Activated T-helper 2 cell treated with anti-CD3 and anti-CD28 coated beads, Interferon-gamma antibody, Interleukin-2, Interleukin-4, amounts not matched to agents 10 μg/mL and 5 μg/mL and 100 μg/mL, durations not matched to agents 14 hours and 24 hours and 36 hours (primary cell): ENCODE measurements at regions of chr18 and their contacts with region 1.

Region 1: DNA sequence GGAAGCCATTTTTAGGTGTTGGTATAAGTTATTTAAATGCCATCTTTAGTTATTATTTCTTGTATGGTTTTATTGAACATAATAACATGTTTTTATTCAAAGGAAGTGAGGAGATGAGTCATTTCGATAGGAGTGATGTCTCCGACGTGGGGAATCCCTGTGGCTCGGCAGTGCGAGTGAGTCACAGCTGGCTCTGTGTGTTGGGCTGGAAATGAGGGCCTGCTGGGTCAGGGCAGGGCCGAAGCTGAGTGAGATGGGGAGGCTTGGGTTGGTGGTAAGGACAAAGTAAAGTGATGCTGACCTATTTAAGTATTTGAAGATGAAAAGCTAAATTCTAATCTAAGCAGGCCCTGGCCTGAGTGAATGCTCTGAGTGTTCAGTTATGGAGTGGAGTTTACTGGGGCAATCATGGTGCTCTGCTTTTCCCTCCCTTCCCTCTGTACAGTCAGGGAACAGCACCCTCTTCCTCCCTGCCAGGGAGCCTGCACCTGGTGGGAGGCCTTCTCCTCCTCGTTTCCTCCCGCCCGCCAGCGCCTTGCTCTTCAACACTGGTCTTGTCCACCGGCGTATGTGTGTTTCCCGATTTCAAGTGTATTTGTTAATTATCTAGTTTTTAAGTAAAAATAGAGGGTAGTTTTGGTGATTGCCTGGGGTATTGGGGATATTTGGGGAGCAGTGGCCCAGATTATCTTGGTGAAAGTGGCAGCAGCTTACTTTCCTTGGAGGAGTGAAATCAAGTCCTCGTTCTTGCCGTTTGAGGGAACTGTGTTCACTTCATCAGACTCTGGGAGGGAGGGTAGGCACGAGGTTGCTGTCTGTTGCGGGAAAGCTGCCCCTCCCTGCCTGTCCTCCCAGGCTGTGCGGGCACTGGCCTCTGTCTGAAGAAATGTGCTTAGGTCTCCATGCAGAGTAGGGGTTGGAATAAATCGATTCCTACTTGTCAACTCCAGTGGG is 157.0 kb downstream of the LDLRAD4 start:
- DNase-seq: peak; percentile 77
- H3K4me3 Mint-ChIP-seq: peak overlapping the region; percentile 53
- H3K27ac Mint-ChIP-seq: peak overlapping the region; percentile 93
- H3K4me1 Mint-ChIP-seq: peaks cover 70% of the 10 kb centered on the region
- H3K27me3 Mint-ChIP-seq: no peaks in the 10 kb centered on the region

Region 2: DNA sequence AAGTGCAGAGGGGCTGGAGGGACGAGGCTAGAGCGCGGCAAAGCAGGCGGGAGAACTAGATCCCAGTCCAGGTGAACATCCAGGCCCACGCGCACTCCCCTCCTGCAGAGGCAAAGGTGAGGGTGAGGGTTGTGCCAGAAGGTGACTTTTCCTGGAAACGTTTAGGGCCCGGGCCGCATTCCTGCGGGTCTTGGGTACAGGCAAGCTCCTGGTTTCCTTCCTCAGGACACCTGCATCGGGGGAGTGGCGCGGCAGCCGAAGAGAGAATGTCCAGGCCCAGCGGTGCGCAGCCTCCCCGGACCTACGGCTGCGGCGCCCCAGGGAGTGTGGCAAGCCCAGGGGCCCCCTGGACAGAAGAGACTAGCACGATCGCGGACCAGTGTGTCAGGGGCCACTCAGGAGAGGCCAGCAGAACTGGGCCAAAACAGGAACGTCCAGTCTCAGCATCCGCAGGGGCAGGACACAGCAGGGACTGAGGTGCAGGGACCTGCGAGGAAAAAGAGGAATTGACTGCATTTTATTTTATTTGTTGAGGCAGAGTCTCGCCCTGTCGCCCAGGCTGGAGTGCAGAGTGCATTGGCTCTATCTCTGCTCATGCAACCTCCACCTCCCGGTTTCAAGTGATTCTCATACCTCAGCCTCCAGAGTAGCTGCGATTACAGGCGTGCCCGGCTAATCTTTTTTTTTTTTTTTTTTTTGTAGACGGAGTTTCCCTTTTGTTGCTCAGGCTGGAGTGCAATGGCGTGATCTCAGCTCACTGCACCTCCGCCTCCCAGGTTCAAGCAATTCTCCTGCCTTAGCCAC is 1403.0 kb before region 1 on chr18:
- intact Hi-C with region 1: no loop called
- DNase-seq: no peak
- H3K4me3 Mint-ChIP-seq: no peak overlapping the region
- H3K27ac Mint-ChIP-seq: no peak overlapping the region
- H3K4me1 Mint-ChIP-seq: peaks cover 4% of the 10 kb centered on the region
- H3K27me3 Mint-ChIP-seq: no peaks in the 10 kb centered on the region

Region 3: DNA sequence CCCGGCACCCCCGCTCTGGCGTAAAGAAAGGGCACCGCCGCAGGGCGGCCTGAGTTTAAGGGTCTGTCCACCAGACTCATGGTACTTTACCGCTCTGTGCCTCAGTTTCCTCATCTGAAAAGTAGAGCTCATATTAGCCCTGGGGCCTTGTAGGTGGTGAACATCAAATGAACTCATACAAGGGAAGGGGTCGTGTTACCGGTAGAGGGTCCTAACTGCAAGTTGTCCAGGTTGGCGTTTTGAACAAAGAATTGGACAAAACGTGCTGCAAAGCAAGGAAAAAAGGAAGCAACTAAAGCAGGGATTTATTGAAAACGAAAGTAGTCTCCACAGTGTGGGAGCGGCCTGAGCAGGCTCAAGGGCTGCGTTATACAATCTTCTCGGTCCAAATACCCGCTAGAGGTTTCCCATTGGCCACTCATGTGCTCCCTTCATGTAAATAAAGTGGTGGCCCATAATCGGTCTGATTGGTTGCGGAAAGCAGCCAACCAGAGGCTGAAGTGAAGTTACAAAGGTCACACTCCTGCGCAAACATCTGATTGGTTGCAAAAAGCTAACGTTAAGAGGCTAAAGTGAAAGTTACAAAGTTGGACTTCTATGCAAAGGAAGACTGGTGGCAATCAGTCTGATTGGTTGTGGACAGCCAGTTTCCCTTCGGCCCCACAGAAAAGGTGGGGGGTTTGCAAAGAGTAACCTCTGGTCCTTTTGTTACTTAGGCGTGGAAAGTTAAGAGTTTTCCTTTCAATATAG is 237.7 kb before region 1 on chr18:
- intact Hi-C with region 1: loop called (anchors 5 kb)
- DNase-seq: peak; percentile 76
- H3K4me3 Mint-ChIP-seq: peak overlapping the region; percentile 96
- H3K27ac Mint-ChIP-seq: peak overlapping the region; percentile 83
- H3K4me1 Mint-ChIP-seq: peaks cover 20% of the 10 kb centered on the region
- H3K27me3 Mint-ChIP-seq: peaks cover 12% of the 10 kb centered on the region

Region 4: GRCh38 chr18:13258921-13259320 is 116.7 kb before region 1 on chr18:
- intact Hi-C with region 1: no loop called
- DNase-seq: no peak
- H3K4me3 Mint-ChIP-seq: no peak overlapping the region
- H3K27ac Mint-ChIP-seq: no peak overlapping the region
- H3K4me1 Mint-ChIP-seq: peaks cover 17% of the 10 kb centered on the region
- H3K27me3 Mint-ChIP-seq: peaks cover 3% of the 10 kb centered on the region

Region 5: DNA sequence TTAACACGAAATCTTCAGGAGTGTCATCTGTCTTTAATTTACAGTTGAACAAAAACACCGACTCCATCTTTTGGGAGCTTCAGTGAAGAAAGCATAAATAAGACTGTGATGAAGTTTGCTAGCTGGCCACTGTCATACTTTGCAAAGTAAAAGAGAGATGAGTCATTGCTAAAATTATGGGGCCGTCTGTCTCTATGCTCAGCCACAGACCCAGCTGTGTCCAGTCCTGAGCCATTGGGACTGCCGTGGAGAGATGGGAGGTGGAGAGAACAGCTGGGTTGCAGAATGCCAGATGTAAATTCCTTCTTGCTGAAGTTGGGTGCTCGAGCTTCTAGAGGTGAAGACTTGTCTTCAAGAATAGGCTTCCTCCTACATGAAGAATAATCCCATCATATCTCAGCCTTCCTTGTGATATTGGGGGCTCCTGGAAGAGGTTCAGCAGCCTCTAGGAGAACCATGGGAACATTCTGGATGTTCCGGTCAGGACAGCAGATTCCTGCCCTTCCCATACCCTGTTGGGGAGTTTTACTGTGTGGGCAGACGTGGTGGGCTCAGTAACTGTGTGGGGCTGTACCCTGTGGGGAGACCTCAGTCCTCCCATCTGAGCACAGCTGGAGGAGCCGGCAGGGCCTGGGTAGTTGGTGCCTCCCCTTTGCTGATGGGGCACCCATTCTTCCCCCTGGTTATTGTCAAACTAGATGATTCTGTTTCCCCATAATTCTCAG is 85.9 kb before region 1 on chr18:
- intact Hi-C with region 1: loop called (anchors 1 kb)
- DNase-seq: no peak
- H3K4me3 Mint-ChIP-seq: no peak overlapping the region
- H3K27ac Mint-ChIP-seq: peak overlapping the region; percentile 64
- H3K4me1 Mint-ChIP-seq: peaks cover 55% of the 10 kb centered on the region
- H3K27me3 Mint-ChIP-seq: no peaks in the 10 kb centered on the region

Region 6: GRCh38 chr18:13464432-13465123 is 89.0 kb after region 1 on chr18:
- intact Hi-C with region 1: loop called (anchors 2 kb)
- DNase-seq: peak; percentile 62
- H3K4me3 Mint-ChIP-seq: peak overlapping the region; percentile 94
- H3K27ac Mint-ChIP-seq: peak overlapping the region; percentile 92
- H3K4me1 Mint-ChIP-seq: peaks cover 39% of the 10 kb centered on the region
- H3K27me3 Mint-ChIP-seq: no peaks in the 10 kb centered on the region

Region 7: DNA sequence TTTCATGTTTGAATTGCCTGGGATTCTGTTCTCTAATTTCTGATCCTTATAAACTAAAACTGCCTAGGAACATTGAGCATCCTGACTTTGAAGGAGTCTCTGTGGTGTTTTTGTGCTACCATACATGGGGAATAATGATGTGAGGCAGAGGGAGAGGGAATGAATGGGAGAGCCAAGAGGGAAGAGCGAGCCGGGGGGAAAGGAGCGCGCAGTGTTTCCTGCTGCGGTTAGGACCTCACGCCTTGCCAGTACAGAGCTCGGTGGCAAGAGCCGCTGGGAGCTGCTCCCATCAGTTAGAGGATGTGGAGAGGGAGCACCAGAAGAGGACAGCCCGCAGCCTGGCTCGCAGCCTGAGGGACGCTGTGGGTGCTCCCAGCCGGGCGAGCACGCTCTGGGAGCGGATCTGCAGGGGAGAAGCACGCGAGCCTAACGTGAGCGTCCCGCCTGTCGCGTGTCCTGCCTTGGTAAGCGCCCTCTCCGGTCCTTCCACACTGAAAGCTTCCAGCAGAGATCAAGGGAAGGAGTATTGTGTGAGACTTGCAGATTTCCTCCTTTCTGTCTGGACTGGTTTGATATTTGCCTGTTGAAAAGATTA is 236.1 kb after region 1 on chr18:
- intact Hi-C with region 1: loop called (anchors 5 kb)
- DNase-seq: no peak
- H3K4me3 Mint-ChIP-seq: peak overlapping the region; percentile 78
- H3K27ac Mint-ChIP-seq: peak overlapping the region; percentile 90
- H3K4me1 Mint-ChIP-seq: peaks cover 82% of the 10 kb centered on the region
- H3K27me3 Mint-ChIP-seq: no peaks in the 10 kb centered on the region